GM12878 (cell line): ENCODE measurements at regions of chr21 and their contacts with region 1.

Region 1: DNA sequence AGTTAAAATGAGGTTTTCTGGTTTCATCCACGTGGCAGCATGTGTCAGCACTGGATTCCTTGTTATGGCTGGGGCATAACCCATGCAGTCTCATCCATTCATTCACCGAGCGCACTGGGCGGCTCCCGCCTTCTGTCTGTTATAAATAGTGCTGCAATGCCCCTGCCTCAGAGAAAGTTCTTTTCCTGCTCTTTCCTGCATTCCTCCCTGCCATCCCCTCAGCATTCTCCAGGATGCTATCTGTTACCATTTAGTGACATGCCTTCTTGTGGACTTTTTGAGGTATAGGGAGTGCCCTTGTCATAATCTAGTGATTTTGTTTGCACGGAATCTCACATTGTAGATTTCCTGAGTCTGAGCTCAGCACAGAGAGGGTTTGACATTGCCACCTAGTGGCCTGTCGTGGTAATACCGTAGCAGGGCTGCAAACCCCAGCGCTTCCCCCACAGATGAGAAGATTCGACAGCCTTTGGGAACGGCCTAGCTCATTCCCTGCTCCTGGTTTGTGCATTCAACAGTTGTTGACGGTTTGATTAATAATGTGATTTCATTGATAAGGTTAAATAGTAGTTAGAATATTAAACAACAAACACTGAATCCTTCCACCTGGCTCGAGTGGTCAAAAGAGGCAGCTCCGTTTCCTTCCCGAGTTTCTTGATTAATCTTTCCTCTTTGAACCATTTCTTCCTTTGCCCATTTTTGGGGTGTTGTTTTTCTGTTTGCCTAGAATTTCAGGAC is 46.3 kb downstream of the UMODL1 start:
- DNase-seq: peak; percentile 37
- ATAC-seq: peak; percentile 88
- H3K4me3 ChIP-seq: peak overlapping the region; percentile 38; the same call in 1 of the 2 replicates
- H3K27ac ChIP-seq: 0 out of 2 replicates have a peak overlapping the region, but pooled peaks have one; percentile 3
- H3K4me1 ChIP-seq: peaks cover 37% of the 10 kb centered on the region
- H3K27me3 ChIP-seq: peaks cover 0 to under 1% of the 10 kb centered on the region in 2 experiments; a peak in 2 of 4 replicates
- CTCF ChIP-seq: peak; percentile 90 to 93 (median 91)
- EP300 ChIP-seq: no peak
- POLR2A ChIP-seq: no peak
- RAD21 ChIP-seq: peak; percentile 88

Region 2: DNA sequence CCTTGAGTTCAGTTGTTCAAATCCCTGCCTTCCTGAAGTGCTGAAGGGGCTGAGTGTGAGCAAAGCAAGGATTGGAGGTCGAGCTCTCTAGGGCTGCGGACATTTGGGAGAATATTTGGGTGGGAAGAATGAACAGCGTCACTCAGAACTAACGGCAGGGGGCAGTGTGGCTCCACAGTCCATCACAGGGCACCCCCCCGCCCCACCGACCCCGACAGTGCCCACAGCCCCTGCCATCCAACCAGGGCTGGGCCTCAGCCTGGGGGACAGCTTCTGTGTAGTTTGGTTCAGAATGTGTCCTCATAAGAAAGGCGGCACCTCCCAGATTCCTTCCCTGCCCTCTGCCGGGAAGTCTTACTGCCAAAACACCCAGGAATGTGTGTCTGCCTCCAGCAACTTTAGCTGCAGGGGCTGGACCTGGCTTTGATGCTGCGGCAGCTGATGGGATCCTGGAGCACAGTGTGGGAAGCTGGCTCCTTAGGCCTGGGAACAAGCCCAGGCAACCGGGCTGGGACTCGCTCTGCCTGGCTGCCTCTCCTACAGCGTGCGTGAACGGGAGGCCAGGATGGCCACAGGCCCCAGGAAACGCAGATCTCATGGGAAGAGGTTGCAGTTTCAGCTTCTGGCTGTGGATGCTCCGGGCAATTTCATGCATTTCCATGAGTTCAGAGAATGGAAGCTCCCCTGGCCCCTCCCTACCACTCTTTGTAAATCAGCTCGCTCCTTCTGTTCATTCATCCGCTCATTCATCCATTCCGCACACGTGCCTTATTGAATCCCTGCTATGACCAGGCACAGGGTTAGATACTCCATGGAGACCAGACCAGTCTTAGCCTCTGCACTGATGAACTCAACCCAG is 504.5 kb before region 1 on chr21:
- CTCF ChIA-PET with region 1: interaction called, 17 read pairs
- POLR2A ChIA-PET with region 1: no interaction called
- RAD21 ChIA-PET with region 1: interaction called, 22 read pairs
- SMC1A ChIA-PET with region 1: interaction called, 14 read pairs
- in situ Hi-C with region 1: loop called (anchors 5 kb)
- intact Hi-C with region 1: loop called (anchors 1 kb)
- DNase-seq: no peak
- ATAC-seq: peak; percentile 77
- H3K4me3 ChIP-seq: no peak overlapping the region
- H3K27ac ChIP-seq: no peak overlapping the region
- H3K4me1 ChIP-seq: no peaks in the 10 kb centered on the region
- H3K27me3 ChIP-seq: no peaks in the 10 kb centered on the region
- CTCF ChIP-seq: peak; percentile 47 to 68 (median 56)
- EP300 ChIP-seq: no peak
- POLR2A ChIP-seq: no peak
- RAD21 ChIP-seq: peak; percentile 49

Region 3: GRCh38 chr21:41823166-41823565 is 294.2 kb before region 1 on chr21:
- CTCF ChIA-PET with region 1: interaction called, 48 read pairs
- POLR2A ChIA-PET with region 1: no interaction called
- RAD21 ChIA-PET with region 1: interaction called, 43 read pairs
- SMC1A ChIA-PET with region 1: interaction called, 3 read pairs
- in situ Hi-C with region 1: loop called (anchors 5 kb)
- intact Hi-C with region 1: no loop called
- DNase-seq: no peak
- ATAC-seq: no peak
- H3K4me3 ChIP-seq: no peak overlapping the region
- H3K27ac ChIP-seq: no peak overlapping the region
- H3K4me1 ChIP-seq: no peaks in the 10 kb centered on the region
- H3K27me3 ChIP-seq: no peaks in the 10 kb centered on the region
- CTCF ChIP-seq: no peak
- EP300 ChIP-seq: no peak
- POLR2A ChIP-seq: no peak
- RAD21 ChIP-seq: no peak

Region 4: GRCh38 chr21:41899426-41900202 is 217.8 kb before region 1 on chr21:
- CTCF ChIA-PET with region 1: interaction called, 6 read pairs
- POLR2A ChIA-PET with region 1: no interaction called
- RAD21 ChIA-PET with region 1: interaction called, 3 read pairs
- SMC1A ChIA-PET with region 1: no interaction called
- in situ Hi-C with region 1: no loop called
- intact Hi-C with region 1: loop called (anchors 5 kb)
- DNase-seq: no peak
- ATAC-seq: peak; percentile 52
- H3K4me3 ChIP-seq: no peak overlapping the region
- H3K27ac ChIP-seq: no peak overlapping the region
- H3K4me1 ChIP-seq: peaks cover 11% of the 10 kb centered on the region
- H3K27me3 ChIP-seq: no peaks in the 10 kb centered on the region
- CTCF ChIP-seq: no peak
- EP300 ChIP-seq: no peak
- POLR2A ChIP-seq: no peak
- RAD21 ChIP-seq: no peak

Region 5: DNA sequence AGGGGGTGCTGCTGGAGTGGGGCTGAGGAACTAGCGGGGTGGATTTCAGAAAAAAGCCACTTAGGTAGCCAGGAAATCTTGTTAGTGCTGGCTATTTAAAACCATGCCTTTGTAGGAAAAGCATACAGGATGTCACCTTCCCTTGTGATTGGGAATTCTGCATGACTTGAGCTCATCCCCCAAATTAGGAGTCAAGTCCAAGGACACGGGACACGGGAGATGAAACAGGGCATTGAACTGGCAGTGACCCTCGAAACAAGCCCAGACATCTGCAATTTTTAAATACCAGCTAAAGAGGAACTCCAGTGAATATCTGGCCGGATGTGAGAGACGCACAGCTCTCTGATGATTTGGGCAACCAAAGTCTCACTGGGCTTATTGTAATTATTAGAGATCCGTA is 196.4 kb before region 1 on chr21:
- CTCF ChIA-PET with region 1: interaction called, 10 read pairs
- POLR2A ChIA-PET with region 1: no interaction called
- RAD21 ChIA-PET with region 1: interaction called, 11 read pairs
- SMC1A ChIA-PET with region 1: interaction called, 6 read pairs
- in situ Hi-C with region 1: no loop called
- intact Hi-C with region 1: loop called (anchors 10 kb)
- DNase-seq: no peak
- ATAC-seq: peak; percentile 56
- H3K4me3 ChIP-seq: no peak overlapping the region
- H3K27ac ChIP-seq: peak overlapping the region; percentile 45; the same call in 1 of the 2 replicates
- H3K4me1 ChIP-seq: peaks cover 38% of the 10 kb centered on the region
- H3K27me3 ChIP-seq: no peaks in the 10 kb centered on the region
- CTCF ChIP-seq: no peak
- EP300 ChIP-seq: no peak
- POLR2A ChIP-seq: no peak
- RAD21 ChIP-seq: no peak

Region 6: DNA sequence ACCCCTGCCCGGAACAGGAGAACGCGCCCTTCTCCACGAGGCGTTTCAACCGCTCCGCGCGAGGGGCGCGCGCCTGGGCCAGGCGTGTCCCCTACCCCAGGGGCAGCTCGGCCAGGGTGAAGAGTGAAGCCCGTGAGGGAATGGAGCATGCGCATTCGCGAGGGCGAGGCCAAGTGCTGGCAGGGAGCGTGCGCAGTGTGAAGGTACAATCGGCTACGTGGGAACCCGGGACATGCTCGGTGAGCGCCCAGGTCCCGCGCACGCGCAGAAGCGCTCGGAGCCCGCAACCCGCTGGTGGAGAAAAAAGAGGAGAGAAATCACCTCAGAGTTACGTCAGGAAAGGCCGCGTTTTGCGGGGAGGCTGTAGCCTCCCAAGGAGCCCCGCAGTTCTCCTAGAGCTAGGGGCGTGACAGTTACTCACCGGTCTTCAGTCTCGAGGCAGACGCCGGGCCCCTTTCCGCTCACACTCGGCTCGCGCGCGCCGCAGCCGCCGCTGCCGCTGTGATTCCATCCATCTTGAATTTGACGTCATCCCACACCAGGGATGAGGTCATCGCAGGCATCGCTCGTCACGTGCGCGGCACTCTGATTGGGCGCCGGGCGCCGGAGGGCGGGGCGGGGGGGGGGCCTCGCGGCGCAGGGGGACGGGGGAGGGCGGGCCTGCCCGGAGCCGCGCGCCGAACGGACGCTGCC is 107.4 kb before region 1 on chr21 and contains the start of gene ZBTB21:
- CTCF ChIA-PET with region 1: interaction called, 22 read pairs
- POLR2A ChIA-PET with region 1: interaction called, 6 read pairs
- RAD21 ChIA-PET with region 1: interaction called, 4 read pairs
- SMC1A ChIA-PET with region 1: interaction called, 20 read pairs
- in situ Hi-C with region 1: no loop called
- intact Hi-C with region 1: loop called (anchors 2 kb)
- DNase-seq: peak; percentile 96
- ATAC-seq: peak; percentile 89
- H3K4me3 ChIP-seq: peak within 1 kb of the TSS; percentile 81
- H3K27ac ChIP-seq: peak within 1 kb of the TSS; percentile 96
- H3K4me1 ChIP-seq: peaks cover 5% of the 10 kb centered on the region
- H3K27me3 ChIP-seq: no peaks in the 10 kb centered on the region
- CTCF ChIP-seq: no peak
- EP300 ChIP-seq: peak in 1 of 2 experiments; percentile 27; a peak in 1 of 4 replicates
- POLR2A ChIP-seq: peak; percentile 79
- RAD21 ChIP-seq: no peak
- polyA plus RNA-seq, gene ZBTB21: 1.8 to 2.3 TPM

Region 7: DNA sequence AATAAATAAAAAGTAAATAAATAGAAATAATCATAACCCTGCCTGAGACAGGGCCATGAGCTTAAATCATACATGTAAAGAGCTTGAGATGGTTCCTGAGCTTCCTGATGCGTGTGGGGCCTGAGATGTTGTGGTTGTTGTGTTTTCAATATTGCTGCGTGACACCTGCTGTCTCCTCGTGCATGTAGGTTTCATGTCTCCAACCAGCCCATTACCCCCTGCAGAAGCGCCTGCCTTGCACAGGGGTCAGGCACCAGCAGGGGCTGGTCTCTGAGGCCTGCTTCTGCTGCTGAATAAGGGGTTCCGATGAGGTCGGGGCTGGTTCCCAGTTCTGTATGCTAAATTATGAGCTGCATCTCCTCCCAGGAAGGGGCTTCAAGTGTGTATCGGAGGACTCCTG is 30.4 kb before region 1 on chr21:
- CTCF ChIA-PET with region 1: interaction called, 11 read pairs
- POLR2A ChIA-PET with region 1: no interaction called
- RAD21 ChIA-PET with region 1: interaction called, 10 read pairs
- SMC1A ChIA-PET with region 1: interaction called, 6 read pairs
- in situ Hi-C with region 1: no loop called
- intact Hi-C with region 1: no loop called
- DNase-seq: no peak
- ATAC-seq: peak; percentile 49; the same call in 2 of the 3 replicates
- H3K4me3 ChIP-seq: no peak overlapping the region
- H3K27ac ChIP-seq: no peak overlapping the region
- H3K4me1 ChIP-seq: peaks cover 4% of the 10 kb centered on the region
- H3K27me3 ChIP-seq: no peaks in the 10 kb centered on the region; a peak in 1 of 4 replicates
- CTCF ChIP-seq: no peak
- EP300 ChIP-seq: no peak
- POLR2A ChIP-seq: no peak
- RAD21 ChIP-seq: no peak